ENCODE measurements at regions of chr17 and their contacts with region 1.

Region 1: DNA sequence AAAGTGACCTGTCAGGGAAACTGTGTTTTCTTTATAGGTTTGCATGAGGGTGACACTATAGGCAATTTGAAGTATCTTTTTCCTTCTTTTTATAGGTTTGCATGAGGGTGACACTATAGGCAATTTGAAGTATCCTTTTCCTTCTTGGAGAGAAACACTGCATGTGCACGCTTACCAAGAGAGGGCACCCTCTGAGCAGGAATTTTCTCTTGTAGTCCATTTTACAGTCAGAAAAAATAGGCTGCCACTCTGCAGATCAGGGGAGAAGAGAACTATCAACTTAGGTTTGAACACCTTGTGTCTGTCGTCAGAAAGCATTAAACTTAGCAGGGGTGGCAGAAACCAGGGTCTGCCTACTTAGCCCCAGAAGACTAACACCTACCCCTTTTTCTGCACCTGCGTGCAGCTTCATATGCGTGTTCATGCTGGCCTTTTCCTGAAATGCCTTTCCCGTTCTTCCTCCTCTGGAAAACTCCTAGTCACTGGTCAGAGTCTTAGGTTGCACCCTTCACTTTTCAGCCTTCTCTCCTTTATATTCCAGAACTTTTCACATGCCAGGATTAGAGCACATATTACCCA is 16.4 kb upstream of the SMIM36 start:
- DNase-seq: no peak
- H3K4me3 ChIP-seq: no peak overlapping the region
- H3K27me3 ChIP-seq: peaks cover 1% of the 10 kb centered on the region; the same call in 1 of the 2 replicates
- CTCF ChIP-seq: peak; percentile 74

Region 2: GRCh38 chr17:55571095-55571494 is 43.5 kb after region 1 on chr17:
- CTCF ChIA-PET with region 1: interaction called, 10 read pairs
- POLR2A ChIA-PET with region 1: no interaction called
- DNase-seq: no peak
- H3K4me3 ChIP-seq: no peak overlapping the region
- H3K27me3 ChIP-seq: peaks cover 3% of the 10 kb centered on the region
- CTCF ChIP-seq: no peak

Region 3: GRCh38 chr17:55635253-55635914 is 107.8 kb after region 1 on chr17:
- CTCF ChIA-PET with region 1: interaction called, 59 read pairs
- POLR2A ChIA-PET with region 1: no interaction called
- DNase-seq: no peak
- H3K4me3 ChIP-seq: no peak overlapping the region
- H3K27me3 ChIP-seq: no peaks in the 10 kb centered on the region
- CTCF ChIP-seq: no peak

Region 4: GRCh38 chr17:55648086-55648485 is 120.5 kb after region 1 on chr17:
- CTCF ChIA-PET with region 1: interaction called, 15 read pairs
- POLR2A ChIA-PET with region 1: no interaction called
- DNase-seq: no peak
- H3K4me3 ChIP-seq: no peak overlapping the region
- H3K27me3 ChIP-seq: no peaks in the 10 kb centered on the region
- CTCF ChIP-seq: no peak

Region 5: GRCh38 chr17:55735731-55736405 is 208.2 kb after region 1 on chr17:
- CTCF ChIA-PET with region 1: interaction called, 21 read pairs
- POLR2A ChIA-PET with region 1: no interaction called
- DNase-seq: no peak
- H3K4me3 ChIP-seq: no peak overlapping the region
- H3K27me3 ChIP-seq: 0 out of 2 replicates have a peak, but pooled peaks cover 1% of the 10 kb centered on the region
- CTCF ChIP-seq: peak; percentile 81

Measured in BJ (cell line).